ENCODE measurements at regions of chr9 and their contacts with region 1.

Region 1: DNA sequence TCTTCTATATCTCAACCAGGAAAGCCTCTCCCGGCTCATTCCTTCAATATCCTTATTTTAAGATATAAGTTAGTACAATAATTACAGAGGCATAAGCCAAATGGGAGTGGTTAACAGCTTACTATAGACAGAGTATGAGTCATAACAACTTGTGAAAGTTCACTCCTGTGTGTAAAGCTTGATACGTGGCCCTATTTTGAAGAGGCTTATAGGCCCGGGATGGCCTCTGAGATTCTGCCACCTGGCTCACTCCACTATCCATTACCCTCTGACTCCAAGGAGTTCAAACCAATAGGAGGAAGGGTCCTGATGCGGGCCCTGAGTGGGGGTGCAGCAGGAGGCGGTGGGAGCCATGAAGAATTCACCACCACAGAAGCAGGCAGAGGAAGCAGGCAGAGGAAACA is 36.6 kb downstream of the B4GALT1 start:
- DNase-seq: no peak
- ATAC-seq: peak; percentile 32
- H3K4me3 ChIP-seq: peak overlapping the region in 1 of 5 experiments; percentile 17
- H3K4me3 Mint-ChIP-seq: peak overlapping the region; percentile 58
- H3K27ac ChIP-seq: peak overlapping the region; percentile 71 to 93
- H3K27ac Mint-ChIP-seq: peak overlapping the region; percentile 88
- H3K4me1 ChIP-seq: peaks cover 66 to 81% of the 10 kb centered on the region in 2 donors
- H3K4me1 Mint-ChIP-seq: peaks cover 92% of the 10 kb centered on the region
- H3K27me3 ChIP-seq: no peaks in the 10 kb centered on the region
- H3K27me3 Mint-ChIP-seq: no peaks in the 10 kb centered on the region
- CTCF ChIP-seq: no peak

Region 2: GRCh38 chr9:33159760-33160127 is 29.2 kb after region 1 on chr9:
- CTCF ChIA-PET with region 1: interaction called, 23 read pairs
- POLR2A ChIA-PET with region 1: interaction called, 8 read pairs
- intact Hi-C with region 1: loop called (anchors 2 kb)
- DNase-seq: peak; percentile 81
- ATAC-seq: peak; percentile 53
- H3K4me3 ChIP-seq: peak overlapping the region in 3 of 5 experiments; percentile 23 to 59 (median 35)
- H3K4me3 Mint-ChIP-seq: peak overlapping the region; percentile 95
- H3K27ac ChIP-seq: peak overlapping the region; percentile 92 to 95
- H3K27ac Mint-ChIP-seq: peak overlapping the region; percentile 93
- H3K4me1 ChIP-seq: peaks cover 98 to 99% of the 10 kb centered on the region in 2 donors
- H3K4me1 Mint-ChIP-seq: peaks cover 96% of the 10 kb centered on the region
- H3K27me3 ChIP-seq: no peaks in the 10 kb centered on the region
- H3K27me3 Mint-ChIP-seq: no peaks in the 10 kb centered on the region
- CTCF ChIP-seq: no peak

Region 3: GRCh38 chr9:33320568-33321261 is 190.2 kb after region 1 on chr9:
- CTCF ChIA-PET with region 1: no interaction called
- POLR2A ChIA-PET with region 1: no interaction called
- intact Hi-C with region 1: no loop called
- DNase-seq: no peak
- ATAC-seq: no peak
- H3K4me3 ChIP-seq: no peak overlapping the region
- H3K4me3 Mint-ChIP-seq: no peak overlapping the region
- H3K27ac ChIP-seq: no peak overlapping the region
- H3K27ac Mint-ChIP-seq: no peak overlapping the region
- H3K4me1 ChIP-seq: no peaks in the 10 kb centered on the region
- H3K4me1 Mint-ChIP-seq: no peaks in the 10 kb centered on the region
- H3K27me3 ChIP-seq: no peaks in the 10 kb centered on the region
- H3K27me3 Mint-ChIP-seq: no peaks in the 10 kb centered on the region
- CTCF ChIP-seq: no peak

Measured in B cell (primary cell).